Sigmoid colon (tissue), 7 donors: ENCODE measurements at regions of chr1 and their contacts with region 1.

Region 1: GRCh38 chr1:178870944-178871343 is at the start of gene ANGPTL1:
- DNase-seq: no peak
- H3K4me3 ChIP-seq: peak within 1 kb of the TSS; percentile 35 to 56 (median 50)
- H3K27ac ChIP-seq: peak within 1 kb of the TSS; percentile 74 to 80 (median 77)
- H3K4me1 ChIP-seq: peaks cover 0 to 33% (median 30%) of the 10 kb centered on the region in 4 donors
- H3K27me3 ChIP-seq: no peaks in the 10 kb centered on the region
- CTCF ChIP-seq: peak in 1 of 4 experiments; percentile 10
- EP300 ChIP-seq: no peak
- POLR2A ChIP-seq: no peak
- total RNA-seq, gene ANGPTL1: 117 to 173 (median 140) TPM

Region 2: DNA sequence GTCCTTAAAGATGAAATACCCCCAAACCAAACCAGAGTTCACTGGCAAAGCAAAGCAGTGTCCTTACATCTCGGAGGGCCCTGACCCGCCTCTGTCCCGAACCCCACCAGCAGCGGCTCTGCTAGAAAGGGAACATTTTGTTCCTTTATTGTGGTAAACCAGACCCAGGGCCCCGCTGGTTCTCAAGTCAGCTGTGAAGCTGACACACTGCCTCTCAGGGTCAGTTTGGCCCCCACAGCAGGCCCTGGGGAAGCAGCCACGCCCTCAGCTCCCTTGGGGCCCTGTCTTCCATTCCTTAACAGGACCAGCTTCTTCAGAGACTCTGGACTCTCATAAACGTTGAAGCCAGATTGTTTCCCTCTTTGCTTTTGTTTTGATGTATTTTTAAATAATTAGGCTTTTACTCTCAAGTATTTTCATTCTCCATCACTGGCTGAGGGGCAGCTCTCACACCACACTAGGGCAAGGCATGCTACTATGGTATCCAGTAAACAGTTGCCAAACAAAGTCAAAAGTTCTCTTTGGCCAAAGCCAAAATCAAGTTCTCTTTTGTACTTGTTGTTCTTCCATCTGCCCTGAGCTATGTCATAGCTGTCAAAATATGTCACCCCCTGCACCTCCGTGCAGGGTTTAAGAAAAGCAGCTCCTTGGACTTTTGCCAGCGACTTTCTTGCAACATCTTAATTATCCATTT is 61.1 kb after region 1 on chr1:
- intact Hi-C with region 1: loop called (anchors 2 kb)
- DNase-seq: peak; percentile 96
- H3K4me3 ChIP-seq: no peak overlapping the region
- H3K27ac ChIP-seq: peak overlapping the region; percentile 82 to 93 (median 87)
- H3K4me1 ChIP-seq: peaks cover 0 to 92% (median 88%) of the 10 kb centered on the region in 4 donors
- H3K27me3 ChIP-seq: no peaks in the 10 kb centered on the region
- CTCF ChIP-seq: no peak
- EP300 ChIP-seq: peak; percentile 62 to 99 (median 98)
- POLR2A ChIP-seq: no peak

Region 3: DNA sequence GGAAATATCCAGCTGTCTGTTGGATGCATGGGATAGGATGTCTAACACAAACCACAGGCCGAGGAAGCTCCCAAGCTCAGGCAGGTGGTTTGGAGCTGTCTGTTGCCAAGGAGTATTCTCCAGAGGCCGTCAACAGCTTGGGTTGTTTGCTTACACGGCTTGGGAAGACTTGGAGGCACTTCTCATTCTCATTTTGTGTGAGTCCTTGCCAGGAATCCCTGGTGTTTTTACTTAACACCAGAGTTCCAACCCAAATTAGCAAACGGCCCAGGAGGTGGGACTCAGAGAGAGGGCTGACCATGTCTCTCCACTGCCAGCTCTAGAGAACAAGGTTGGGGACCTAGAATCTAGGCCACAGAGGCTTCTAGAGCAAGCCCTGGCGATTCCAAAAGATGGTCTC is 82.1 kb after region 1 on chr1:
- intact Hi-C with region 1: loop called (anchors 1 kb)
- DNase-seq: peak; percentile 88
- H3K4me3 ChIP-seq: no peak overlapping the region
- H3K27ac ChIP-seq: peak overlapping the region; percentile 58 to 74 (median 72)
- H3K4me1 ChIP-seq: peaks cover 0 to 57% (median 51%) of the 10 kb centered on the region in 4 donors
- H3K27me3 ChIP-seq: no peaks in the 10 kb centered on the region
- CTCF ChIP-seq: no peak
- EP300 ChIP-seq: no peak
- POLR2A ChIP-seq: no peak